CD8-positive, alpha-beta T cell (primary cell): ENCODE measurements at regions of chr6 and their contacts with region 1.

Region 1: DNA sequence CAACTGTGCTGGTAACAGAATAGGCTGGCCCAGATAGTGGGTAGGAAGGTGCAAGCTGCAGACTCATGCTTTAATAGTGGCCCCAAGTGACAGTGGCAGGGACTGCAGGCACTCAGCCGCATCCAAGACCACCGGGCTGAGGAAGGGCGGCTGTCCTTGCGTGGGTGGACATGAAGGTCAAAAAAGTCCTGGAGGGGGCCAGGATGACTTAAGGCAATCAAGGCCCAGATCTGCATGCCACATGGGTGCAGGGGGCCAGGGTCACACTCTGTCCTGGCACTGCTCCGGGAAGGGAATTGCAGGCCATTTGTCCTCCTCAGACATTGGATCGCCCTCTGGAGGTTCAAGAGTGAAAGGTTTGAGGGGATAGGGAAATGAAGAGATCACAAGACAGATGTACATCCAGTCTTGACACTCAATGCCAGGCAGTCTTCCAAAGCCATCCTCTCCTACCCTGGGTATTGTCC is 10.4 kb upstream of the VNN2 start:
- DNase-seq: peak in 5 of 9 experiments; percentile 1 to 55 (median 31)
- ATAC-seq: peak; percentile 39
- H3K4me3 ChIP-seq: no peak overlapping the region
- H3K4me3 Mint-ChIP-seq: no peak overlapping the region
- H3K27ac ChIP-seq: no peak overlapping the region
- H3K27ac Mint-ChIP-seq: no peak overlapping the region
- H3K4me1 ChIP-seq: peaks cover 12% of the 10 kb centered on the region
- H3K4me1 Mint-ChIP-seq: peaks cover 19% of the 10 kb centered on the region
- H3K27me3 ChIP-seq: no peaks in the 10 kb centered on the region
- H3K27me3 Mint-ChIP-seq: no peaks in the 10 kb centered on the region
- CTCF ChIP-seq: peak; percentile 28

Region 2: DNA sequence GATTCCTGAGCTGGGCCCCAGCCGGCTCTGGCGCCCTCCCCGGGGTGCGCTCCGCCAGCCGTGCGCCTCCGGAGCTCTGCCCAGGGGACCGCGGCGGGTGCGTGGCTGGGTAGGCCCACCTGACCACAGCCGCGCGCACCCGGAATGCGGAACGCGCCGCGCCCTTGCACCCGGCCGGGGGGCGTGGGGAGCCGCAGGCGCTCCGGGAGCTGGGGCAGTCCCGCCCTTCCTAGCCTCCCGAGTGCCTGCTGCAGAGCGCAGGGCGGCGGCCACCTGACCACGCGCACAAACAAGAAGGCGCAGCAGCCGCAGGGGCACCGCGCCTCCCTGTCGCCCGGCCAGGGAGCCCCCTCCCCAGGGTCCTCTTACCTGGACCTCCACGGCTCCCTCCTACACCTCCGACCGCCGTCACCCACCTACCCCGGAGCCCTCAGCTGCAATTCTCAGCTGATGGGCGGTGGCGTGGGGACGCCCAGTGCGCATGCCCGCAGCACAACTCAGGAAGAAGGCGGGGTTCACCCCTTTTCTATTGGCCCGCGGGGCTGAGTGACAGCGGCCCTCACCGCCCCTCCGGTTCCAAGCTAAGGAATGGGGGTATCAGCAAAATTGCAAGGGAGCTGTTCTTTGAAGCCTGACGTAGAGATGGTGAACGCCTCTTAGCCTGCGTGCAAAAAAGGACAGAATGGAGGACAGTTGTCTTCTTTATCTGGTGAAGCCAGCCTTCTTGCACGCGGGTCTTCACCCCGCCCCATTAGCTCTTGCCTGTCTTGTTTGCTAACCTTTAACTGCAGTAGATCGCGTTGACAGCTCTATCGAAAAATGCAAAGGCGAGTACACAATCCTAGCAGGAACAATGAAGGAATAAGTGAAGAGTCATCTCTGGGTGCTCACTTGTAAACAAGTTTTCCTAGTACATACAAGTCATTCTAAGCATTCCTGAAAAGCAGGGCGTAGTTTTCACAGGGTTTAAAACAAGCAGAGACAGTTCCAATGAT is 255.1 kb before region 1 on chr6 and contains the start of gene STX7:
- CTCF ChIA-PET with region 1: no interaction called
- POLR2A ChIA-PET with region 1: interaction called, 6 read pairs
- intact Hi-C with region 1: loop called in 1 of 2 experiments (anchors 1 kb)
- DNase-seq: peak; percentile 67 to 91 (median 85)
- ATAC-seq: peak; percentile 93
- H3K4me3 ChIP-seq: peak within 1 kb of the TSS; percentile 75 to 90
- H3K4me3 Mint-ChIP-seq: peak within 1 kb of the TSS; percentile 97
- H3K27ac ChIP-seq: peak within 1 kb of the TSS; percentile 43 to 57
- H3K27ac Mint-ChIP-seq: peak within 1 kb of the TSS; percentile 91
- H3K4me1 ChIP-seq: peaks cover 8% of the 10 kb centered on the region
- H3K4me1 Mint-ChIP-seq: peaks cover 35% of the 10 kb centered on the region
- H3K27me3 ChIP-seq: no peaks in the 10 kb centered on the region
- H3K27me3 Mint-ChIP-seq: no peaks in the 10 kb centered on the region
- CTCF ChIP-seq: no peak
- total RNA-seq, gene STX7: 5.4 to 5.5 TPM

Region 3: DNA sequence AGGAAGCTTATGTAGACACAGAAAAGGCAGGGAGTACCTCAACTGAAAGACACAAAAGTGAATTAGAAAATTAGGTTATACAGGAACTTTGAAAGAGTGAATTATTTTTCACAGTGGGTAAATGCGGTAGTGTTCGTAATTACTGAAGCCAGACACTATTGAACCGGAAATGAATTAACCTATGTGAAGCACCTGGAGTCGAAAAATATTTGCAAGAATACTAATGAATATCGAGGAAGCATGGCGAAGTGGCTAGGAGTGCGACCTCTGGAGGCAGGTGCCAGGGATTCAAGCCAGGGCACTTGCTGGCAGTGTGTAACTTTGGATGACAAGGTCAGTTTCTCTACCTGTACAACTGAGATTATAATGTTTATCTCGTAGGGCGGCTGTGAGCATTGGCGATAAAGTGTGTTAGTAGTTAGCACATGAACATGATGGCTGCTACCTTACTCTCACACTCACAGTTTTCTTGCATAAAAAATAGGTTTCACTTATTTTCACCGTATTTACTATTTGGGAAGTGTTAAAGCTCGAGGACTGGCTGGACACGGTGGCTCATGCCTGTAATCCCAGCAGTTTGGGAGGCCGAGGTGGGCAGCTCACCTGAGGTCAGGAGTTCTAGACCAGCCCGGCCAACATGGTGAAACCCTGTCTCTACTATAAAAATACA is 30.9 kb after region 1 on chr6:
- CTCF ChIA-PET with region 1: interaction called, 30 read pairs
- POLR2A ChIA-PET with region 1: interaction called, 22 read pairs
- intact Hi-C with region 1: loop called in 1 of 2 experiments (anchors 1 kb)
- DNase-seq: peak; percentile 41 to 85 (median 70)
- ATAC-seq: peak; percentile 80
- H3K4me3 ChIP-seq: peak overlapping the region in 1 of 2 experiments; percentile 91
- H3K4me3 Mint-ChIP-seq: no peak overlapping the region
- H3K27ac ChIP-seq: peak overlapping the region in 1 of 2 experiments; percentile 55
- H3K27ac Mint-ChIP-seq: no peak overlapping the region
- H3K4me1 ChIP-seq: peaks cover 5% of the 10 kb centered on the region
- H3K4me1 Mint-ChIP-seq: peaks cover 29% of the 10 kb centered on the region
- H3K27me3 ChIP-seq: no peaks in the 10 kb centered on the region
- H3K27me3 Mint-ChIP-seq: no peaks in the 10 kb centered on the region
- CTCF ChIP-seq: peak; percentile 72

Region 4: GRCh38 chr6:132813173-132813856 is 45.2 kb after region 1 on chr6:
- CTCF ChIA-PET with region 1: no interaction called
- POLR2A ChIA-PET with region 1: interaction called, 55 read pairs
- intact Hi-C with region 1: loop called (anchors 1 to 5 kb)
- DNase-seq: peak in 8 of 9 experiments; percentile 23 to 81 (median 40)
- ATAC-seq: peak; percentile 17
- H3K4me3 ChIP-seq: peak overlapping the region; percentile 83 to 87
- H3K4me3 Mint-ChIP-seq: peak overlapping the region; percentile 97
- H3K27ac ChIP-seq: peak overlapping the region; percentile 69 to 87
- H3K27ac Mint-ChIP-seq: peak overlapping the region; percentile 99
- H3K4me1 ChIP-seq: peaks cover 25% of the 10 kb centered on the region
- H3K4me1 Mint-ChIP-seq: peaks cover 49% of the 10 kb centered on the region
- H3K27me3 ChIP-seq: no peaks in the 10 kb centered on the region
- H3K27me3 Mint-ChIP-seq: no peaks in the 10 kb centered on the region
- CTCF ChIP-seq: no peak

Region 5: DNA sequence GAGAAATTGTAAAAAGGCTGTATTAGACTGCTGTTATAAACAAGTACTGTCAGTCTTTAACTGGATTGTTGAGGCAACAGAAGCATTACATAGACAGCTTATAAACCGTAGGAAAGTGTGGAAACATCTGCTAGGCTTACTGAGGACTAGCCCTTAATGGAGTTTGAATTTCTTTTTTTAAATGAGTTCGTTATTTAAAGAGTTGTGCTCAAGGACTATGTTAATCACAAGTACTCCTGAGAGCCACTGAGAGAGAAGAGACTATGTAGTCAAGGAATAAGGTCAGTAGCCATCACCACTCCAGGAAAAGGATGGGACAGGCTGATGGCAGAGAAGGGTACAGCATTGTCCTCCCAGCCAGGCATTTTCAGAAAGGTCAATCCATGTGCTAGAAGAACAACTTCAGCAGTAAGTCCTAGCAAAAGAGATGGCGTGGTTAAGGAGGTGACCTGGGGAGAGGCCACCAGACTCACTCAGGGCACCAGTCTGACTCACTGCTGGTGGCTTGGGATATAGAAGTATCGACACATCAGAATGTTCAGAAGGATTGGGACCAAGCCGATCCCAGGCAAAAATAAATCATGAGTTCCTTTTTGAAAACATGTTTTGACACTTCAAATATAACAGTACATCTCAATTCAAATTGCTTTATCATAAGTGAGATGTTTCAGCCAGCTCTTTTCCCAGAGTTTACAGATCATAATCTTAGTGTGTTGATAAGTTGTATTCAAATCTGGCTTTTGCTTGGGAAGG is 52.7 kb after region 1 on chr6:
- CTCF ChIA-PET with region 1: interaction called, 10 read pairs
- POLR2A ChIA-PET with region 1: interaction called, 55 read pairs
- intact Hi-C with region 1: loop called in 1 of 2 experiments (anchors 5 kb)
- DNase-seq: peak in 1 of 9 experiments; percentile 16
- ATAC-seq: no peak
- H3K4me3 ChIP-seq: no peak overlapping the region
- H3K4me3 Mint-ChIP-seq: no peak overlapping the region
- H3K27ac ChIP-seq: peak overlapping the region in 1 of 2 experiments; percentile 44
- H3K27ac Mint-ChIP-seq: peak overlapping the region; percentile 81
- H3K4me1 ChIP-seq: peaks cover 25% of the 10 kb centered on the region
- H3K4me1 Mint-ChIP-seq: peaks cover 55% of the 10 kb centered on the region
- H3K27me3 ChIP-seq: no peaks in the 10 kb centered on the region
- H3K27me3 Mint-ChIP-seq: no peaks in the 10 kb centered on the region
- CTCF ChIP-seq: no peak

Region 6: GRCh38 chr6:133115946-133116345 is 347.9 kb after region 1 on chr6:
- CTCF ChIA-PET with region 1: no interaction called
- POLR2A ChIA-PET with region 1: no interaction called
- intact Hi-C with region 1: no loop called
- DNase-seq: no peak
- ATAC-seq: no peak
- H3K4me3 ChIP-seq: no peak overlapping the region
- H3K4me3 Mint-ChIP-seq: no peak overlapping the region
- H3K27ac ChIP-seq: no peak overlapping the region
- H3K27ac Mint-ChIP-seq: no peak overlapping the region
- H3K4me1 ChIP-seq: no peaks in the 10 kb centered on the region
- H3K4me1 Mint-ChIP-seq: no peaks in the 10 kb centered on the region
- H3K27me3 ChIP-seq: no peaks in the 10 kb centered on the region
- H3K27me3 Mint-ChIP-seq: no peaks in the 10 kb centered on the region
- CTCF ChIP-seq: no peak